Thyroid gland (tissue), 4 donors: ENCODE measurements at regions of chr1 and their contacts with region 1.

Region 1: DNA sequence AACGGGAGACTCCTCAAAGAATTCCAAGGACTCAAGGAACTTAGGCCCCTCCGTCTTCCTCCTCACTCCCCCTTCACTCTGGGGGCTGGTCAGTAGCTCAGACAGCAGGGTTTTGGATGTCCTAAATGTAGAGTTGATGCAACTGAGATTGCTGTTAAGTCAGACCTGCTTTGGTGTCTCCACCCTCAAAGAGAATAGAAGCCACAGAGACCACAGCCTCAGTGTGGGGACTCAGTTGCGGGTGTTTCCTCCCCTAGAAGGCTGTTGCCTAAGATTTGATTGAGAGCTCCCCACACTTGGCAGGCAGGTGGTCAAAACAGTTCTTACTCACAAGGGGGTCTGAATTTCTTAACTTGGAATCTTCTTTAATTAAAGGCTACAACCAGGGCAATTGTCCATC is 7.6 kb downstream of the MAN1C1 start:
- DNase-seq: no peak
- H3K4me3 ChIP-seq: no peak overlapping the region
- H3K27ac ChIP-seq: peak overlapping the region in 2 of 3 donors; percentile 46 to 58
- H3K4me1 ChIP-seq: peaks cover 16 to 51% of the 10 kb centered on the region in 2 donors
- H3K27me3 ChIP-seq: no peaks in the 10 kb centered on the region
- CTCF ChIP-seq: no peak
- POLR2A ChIP-seq: no peak

Region 2: GRCh38 chr1:25580927-25581326 is 43.2 kb before region 1 on chr1:
- intact Hi-C with region 1: no loop called
- DNase-seq: no peak
- H3K4me3 ChIP-seq: no peak overlapping the region
- H3K27ac ChIP-seq: no peak overlapping the region
- H3K4me1 ChIP-seq: no peaks in the 10 kb centered on the region
- H3K27me3 ChIP-seq: no peaks in the 10 kb centered on the region
- CTCF ChIP-seq: no peak
- POLR2A ChIP-seq: no peak

Region 3: GRCh38 chr1:25675729-25676476 is 51.7 kb after region 1 on chr1:
- intact Hi-C with region 1: loop called (anchors 10 kb)
- DNase-seq: no peak
- H3K4me3 ChIP-seq: no peak overlapping the region
- H3K27ac ChIP-seq: peak overlapping the region in 2 of 3 donors; percentile 25 to 58
- H3K4me1 ChIP-seq: peaks cover 12% of the 10 kb centered on the region in 2 donors
- H3K27me3 ChIP-seq: no peaks in the 10 kb centered on the region
- CTCF ChIP-seq: no peak
- POLR2A ChIP-seq: no peak

Region 4: GRCh38 chr1:25729751-25730644 is 105.8 kb after region 1 on chr1:
- intact Hi-C with region 1: loop called (anchors 5 kb)
- DNase-seq: peak in 1 of 2 donors; percentile 53
- H3K4me3 ChIP-seq: no peak overlapping the region
- H3K27ac ChIP-seq: peak overlapping the region; percentile 73 to 92 (median 83)
- H3K4me1 ChIP-seq: peaks cover 50 to 86% of the 10 kb centered on the region in 2 donors
- H3K27me3 ChIP-seq: no peaks in the 10 kb centered on the region
- CTCF ChIP-seq: no peak
- POLR2A ChIP-seq: no peak